ENCODE measurements at regions of chr20 and their contacts with region 1.

Region 1: DNA sequence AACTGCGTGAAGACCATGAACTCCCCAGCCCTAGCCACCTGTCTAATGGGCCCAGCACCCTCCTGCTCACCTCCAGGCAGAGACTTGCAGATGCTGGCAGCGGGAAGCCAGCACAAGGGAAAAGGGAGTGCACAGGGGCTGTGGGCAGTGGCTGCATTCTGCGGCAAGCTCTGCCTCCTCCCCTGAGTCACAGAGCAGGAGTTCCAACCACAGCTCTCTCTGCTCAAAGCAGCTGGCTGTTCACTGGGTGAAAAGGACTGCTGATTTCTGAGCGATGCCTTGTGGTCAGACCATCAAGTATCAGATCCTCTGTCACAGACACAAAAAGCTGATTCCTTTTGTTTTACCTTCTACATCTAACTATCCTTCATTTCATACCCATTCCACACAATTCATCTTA is 10.5 kb downstream of the NKX2-2 start:
- DNase-seq: no peak
- H3K4me3 ChIP-seq: no peak overlapping the region
- H3K27ac ChIP-seq: no peak overlapping the region
- H3K4me1 ChIP-seq: peaks cover 9 to 15% of the 10 kb centered on the region in 2 donors
- H3K27me3 ChIP-seq: peaks cover 29% of the 10 kb centered on the region
- CTCF ChIP-seq: no peak
- POLR2A ChIP-seq: no peak

Region 2: GRCh38 chr20:20549718-20550117 is 953.6 kb before region 1 on chr20:
- intact Hi-C with region 1: no loop called
- DNase-seq: no peak
- H3K4me3 ChIP-seq: no peak overlapping the region
- H3K27ac ChIP-seq: no peak overlapping the region
- H3K4me1 ChIP-seq: no peaks in the 10 kb centered on the region
- H3K27me3 ChIP-seq: no peaks in the 10 kb centered on the region
- CTCF ChIP-seq: no peak
- POLR2A ChIP-seq: no peak

Region 3: GRCh38 chr20:21235484-21236445 is 267.6 kb before region 1 on chr20:
- intact Hi-C with region 1: loop called (anchors 5 kb)
- DNase-seq: peak; percentile 68 to 76
- H3K4me3 ChIP-seq: no peak overlapping the region
- H3K27ac ChIP-seq: peak overlapping the region; percentile 13 to 77 (median 49)
- H3K4me1 ChIP-seq: peaks cover 25 to 35% of the 10 kb centered on the region in 2 donors
- H3K27me3 ChIP-seq: no peaks in the 10 kb centered on the region
- CTCF ChIP-seq: peak; percentile 28 to 74 (median 65)
- POLR2A ChIP-seq: no peak